Tibial artery (tissue), 4 donors: ENCODE measurements at regions of chr9 and their contacts with region 1.

Region 1: GRCh38 chr9:14314929-14315645 is 1.1 kb upstream of the NFIB start:
- DNase-seq: peak; percentile 93 to 98
- H3K4me3 ChIP-seq: peak overlapping the region; percentile 95 to 96
- H3K27ac ChIP-seq: peak overlapping the region; percentile 99 to 100
- H3K4me1 ChIP-seq: peaks cover 0 to 33% (median 19%) of the 10 kb centered on the region in 4 donors
- H3K27me3 ChIP-seq: no peaks in the 10 kb centered on the region
- CTCF ChIP-seq: no peak

Region 2: GRCh38 chr9:13823026-13823425 is 492.1 kb before region 1 on chr9:
- intact Hi-C with region 1: no loop called
- DNase-seq: no peak
- H3K4me3 ChIP-seq: no peak overlapping the region
- H3K27ac ChIP-seq: no peak overlapping the region
- H3K4me1 ChIP-seq: no peaks in the 10 kb centered on the region
- H3K27me3 ChIP-seq: no peaks in the 10 kb centered on the region
- CTCF ChIP-seq: no peak

Region 3: DNA sequence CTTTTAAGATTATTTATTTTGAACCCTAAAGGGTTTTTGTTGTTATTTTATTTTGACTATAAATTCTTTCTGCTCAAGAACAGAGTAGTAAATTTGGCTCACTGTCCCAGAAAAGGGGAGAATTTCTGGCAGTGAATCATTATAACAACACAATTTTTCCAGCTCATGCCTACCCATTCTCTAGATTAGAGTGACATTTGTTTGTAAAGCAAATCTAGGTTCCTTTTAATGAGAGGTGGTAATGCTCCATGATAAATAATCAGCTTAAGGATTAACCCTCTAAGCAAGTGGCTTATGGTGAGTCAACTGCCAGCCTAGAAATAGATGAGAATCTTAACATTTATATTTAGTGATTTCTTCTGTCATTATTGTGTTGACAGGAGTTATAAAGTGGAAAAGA is 410.3 kb before region 1 on chr9:
- intact Hi-C with region 1: no loop called
- DNase-seq: no peak
- H3K4me3 ChIP-seq: no peak overlapping the region
- H3K27ac ChIP-seq: peak overlapping the region; percentile 49 to 57
- H3K4me1 ChIP-seq: peaks cover 0 to 41% (median 17%) of the 10 kb centered on the region in 4 donors
- H3K27me3 ChIP-seq: no peaks in the 10 kb centered on the region
- CTCF ChIP-seq: no peak

Region 4: DNA sequence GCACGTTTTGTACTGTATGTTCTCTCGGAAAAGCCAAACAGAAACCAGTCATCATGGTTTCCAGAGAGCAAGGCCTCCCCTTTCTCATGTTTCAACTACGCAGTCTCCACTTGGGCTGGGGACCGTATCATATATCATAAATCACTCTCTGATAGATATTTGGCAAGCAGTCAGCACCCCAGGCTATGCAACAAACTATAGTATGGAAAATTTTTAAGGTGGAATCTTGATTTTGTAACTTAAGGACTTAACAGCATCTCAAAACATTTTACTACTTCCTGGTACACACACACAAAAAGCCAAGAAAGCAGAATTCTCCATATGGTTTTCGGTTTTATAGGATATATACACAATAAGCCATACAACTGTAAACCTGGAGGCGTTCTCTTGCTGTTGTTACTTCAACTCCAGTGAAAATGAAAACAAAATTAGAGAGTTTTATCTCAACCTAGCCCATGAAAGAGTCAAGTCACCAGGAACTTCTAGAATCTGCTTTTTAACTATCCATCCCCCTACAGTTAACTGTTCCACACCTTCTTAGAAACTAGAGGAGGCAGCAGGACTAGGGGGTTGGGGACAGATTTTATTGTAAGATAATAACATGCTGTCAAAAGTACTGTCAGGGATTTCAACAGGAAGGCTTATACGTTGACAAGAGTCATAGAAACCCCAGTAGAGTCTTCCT is 284.6 kb before region 1 on chr9:
- intact Hi-C with region 1: loop called (anchors 10 kb)
- DNase-seq: no peak
- H3K4me3 ChIP-seq: peak overlapping the region; percentile 19 to 30
- H3K27ac ChIP-seq: peak overlapping the region; percentile 74 to 80
- H3K4me1 ChIP-seq: peaks cover 0 to 59% (median 28%) of the 10 kb centered on the region in 4 donors
- H3K27me3 ChIP-seq: no peaks in the 10 kb centered on the region
- CTCF ChIP-seq: no peak

Region 5: GRCh38 chr9:14056316-14056861 is 258.7 kb before region 1 on chr9:
- intact Hi-C with region 1: no loop called
- DNase-seq: no peak
- H3K4me3 ChIP-seq: no peak overlapping the region
- H3K27ac ChIP-seq: no peak overlapping the region
- H3K4me1 ChIP-seq: peaks cover 0 to 15% (median 4%) of the 10 kb centered on the region in 4 donors
- H3K27me3 ChIP-seq: no peaks in the 10 kb centered on the region
- CTCF ChIP-seq: no peak

Region 6: DNA sequence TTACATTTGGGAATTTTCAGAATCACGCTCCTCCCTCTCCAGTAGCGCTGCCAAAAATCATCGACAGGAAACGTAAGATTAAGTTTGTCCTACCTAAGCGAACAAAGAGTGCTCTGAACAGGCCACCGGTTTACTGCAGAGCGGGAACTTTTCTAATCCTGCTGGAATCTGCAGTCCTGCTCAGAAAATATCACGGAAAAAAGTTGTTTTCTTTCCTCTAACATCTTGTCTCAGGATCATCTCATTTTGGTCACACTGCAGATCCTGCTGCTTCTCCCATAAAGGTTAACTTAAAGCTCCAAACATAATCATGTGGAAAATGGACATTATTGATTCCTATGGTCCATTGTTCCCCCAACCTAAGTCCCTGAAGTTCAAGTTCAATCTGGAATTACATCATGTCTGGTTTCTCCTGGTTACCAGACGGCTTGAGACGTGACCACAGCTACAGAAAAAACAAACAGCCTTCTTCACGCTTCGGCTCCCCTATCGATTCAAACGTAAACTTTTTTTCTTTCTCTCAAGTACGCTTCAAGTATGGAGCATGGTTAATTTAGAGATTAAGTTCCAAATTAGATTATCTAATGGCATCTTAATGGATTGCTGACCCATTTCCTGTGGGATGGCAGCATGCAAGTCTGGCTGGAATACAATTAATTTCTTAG is 218.7 kb before region 1 on chr9:
- intact Hi-C with region 1: loop called (anchors 10 kb)
- DNase-seq: no peak
- H3K4me3 ChIP-seq: peak overlapping the region; percentile 29 to 42
- H3K27ac ChIP-seq: peak overlapping the region; percentile 72 to 74
- H3K4me1 ChIP-seq: peaks cover 0 to 53% (median 27%) of the 10 kb centered on the region in 4 donors
- H3K27me3 ChIP-seq: no peaks in the 10 kb centered on the region
- CTCF ChIP-seq: no peak

Region 7: GRCh38 chr9:14353222-14354056 is 38.4 kb after region 1 on chr9:
- intact Hi-C with region 1: loop called (anchors 5 kb)
- DNase-seq: peak; percentile 96
- H3K4me3 ChIP-seq: peak overlapping the region; percentile 14 to 37
- H3K27ac ChIP-seq: peak overlapping the region; percentile 92 to 94
- H3K4me1 ChIP-seq: peaks cover 0 to 77% (median 50%) of the 10 kb centered on the region in 4 donors
- H3K27me3 ChIP-seq: no peaks in the 10 kb centered on the region
- CTCF ChIP-seq: peak; percentile 88 to 92